Head of caudate nucleus (tissue), 42 donors: ENCODE measurements at regions of chrX and their contacts with region 1.

Region 1: DNA sequence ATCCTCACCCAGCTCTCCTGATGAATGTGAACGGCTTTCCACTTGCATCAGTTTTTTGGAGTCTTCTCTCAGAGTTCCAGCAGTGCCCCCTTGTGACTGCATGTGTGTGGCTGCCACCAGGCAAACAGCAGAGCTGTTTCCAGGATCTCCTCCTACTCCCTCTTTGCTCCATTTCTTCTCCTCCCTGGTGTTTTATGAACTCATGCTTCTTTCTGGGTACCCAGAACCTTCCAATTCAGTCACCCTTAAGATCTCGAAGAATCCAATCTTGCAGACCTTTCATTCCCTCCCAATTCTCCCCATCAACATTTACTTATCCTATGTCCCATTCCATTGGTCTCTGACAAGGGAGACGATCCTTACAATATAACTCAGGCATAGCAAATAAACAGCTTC is 6.8 kb upstream of the TCEANC start:
- DNase-seq: peak; percentile 33 to 83 (median 63)

Region 2: GRCh38 chrX:13506574-13506973 is 139.6 kb before region 1 on chrX:
- intact Hi-C with region 1: loop called (anchors 5 kb)
- DNase-seq: peak in 37 of 42 donors; percentile 5 to 72 (median 46)